ENCODE measurements at regions of chr6 and their contacts with region 1.

Region 1: GRCh38 chr6:117602151-117602898 is at the start of gene GOPC:
- DNase-seq: peak; percentile 87 to 100 (median 94)
- ATAC-seq: peak; percentile 96
- H3K4me3 ChIP-seq: peak within 1 kb of the TSS; percentile 94
- H3K4me3 Mint-ChIP-seq: peak within 1 kb of the TSS; percentile 99
- H3K27ac ChIP-seq: peak within 1 kb of the TSS; percentile 82 to 86
- H3K27ac Mint-ChIP-seq: peak within 1 kb of the TSS; percentile 92
- H3K4me1 ChIP-seq: peaks cover 15% of the 10 kb centered on the region
- H3K4me1 Mint-ChIP-seq: peaks cover 52% of the 10 kb centered on the region
- H3K27me3 ChIP-seq: no peaks in the 10 kb centered on the region
- H3K27me3 Mint-ChIP-seq: no peaks in the 10 kb centered on the region
- CTCF ChIP-seq: no peak
- total RNA-seq, gene GOPC: 9.7 to 10.8 TPM

Region 2: DNA sequence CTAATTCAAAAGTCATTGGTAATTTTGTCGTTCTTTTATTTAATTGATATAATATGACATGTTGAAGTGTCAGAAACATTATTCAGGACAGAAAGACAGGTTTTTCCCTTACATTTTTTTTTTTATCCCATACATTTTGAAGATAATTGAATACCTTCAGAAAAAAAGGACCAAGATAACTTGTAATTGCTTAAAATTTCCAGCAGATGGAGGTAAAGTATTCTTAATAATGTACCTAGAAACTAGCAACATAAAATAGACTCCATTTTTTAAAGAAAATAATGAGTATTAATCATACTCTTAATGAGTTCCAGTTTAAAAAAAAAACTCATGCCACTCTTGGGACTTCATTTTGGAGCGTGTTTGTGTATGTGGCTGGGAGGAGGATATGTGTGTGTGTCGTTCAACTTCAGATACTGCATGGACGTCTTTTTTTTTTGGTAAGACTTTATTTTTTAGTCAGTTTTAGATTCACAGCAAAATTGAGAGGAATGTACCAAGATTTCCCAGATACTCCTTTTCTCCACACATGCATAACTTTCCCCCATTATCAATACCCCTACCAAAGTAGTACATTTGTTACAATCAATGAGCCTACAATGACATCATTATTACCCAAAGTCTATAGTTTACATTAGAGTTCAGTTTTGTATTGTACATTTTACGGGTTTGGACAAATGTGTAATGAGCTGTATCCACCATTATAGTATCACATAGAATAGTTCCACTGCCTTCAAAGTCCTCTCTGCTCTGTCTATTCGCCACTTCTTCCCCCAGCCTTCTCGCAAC is 256.0 kb before region 1 on chr6:
- CTCF ChIA-PET with region 1: no interaction called
- POLR2A ChIA-PET with region 1: no interaction called
- intact Hi-C with region 1: loop called (anchors 2 kb)
- DNase-seq: peak in 3 of 14 experiments; percentile 16 to 30 (median 19)
- ATAC-seq: no peak
- H3K4me3 ChIP-seq: no peak overlapping the region
- H3K4me3 Mint-ChIP-seq: no peak overlapping the region
- H3K27ac ChIP-seq: no peak overlapping the region
- H3K27ac Mint-ChIP-seq: no peak overlapping the region
- H3K4me1 ChIP-seq: no peaks in the 10 kb centered on the region
- H3K4me1 Mint-ChIP-seq: no peaks in the 10 kb centered on the region
- H3K27me3 ChIP-seq: peaks cover 0 to 4% of the 10 kb centered on the region in 2 experiments
- H3K27me3 Mint-ChIP-seq: peaks cover 4% of the 10 kb centered on the region
- CTCF ChIP-seq: peak; percentile 65

Region 3: DNA sequence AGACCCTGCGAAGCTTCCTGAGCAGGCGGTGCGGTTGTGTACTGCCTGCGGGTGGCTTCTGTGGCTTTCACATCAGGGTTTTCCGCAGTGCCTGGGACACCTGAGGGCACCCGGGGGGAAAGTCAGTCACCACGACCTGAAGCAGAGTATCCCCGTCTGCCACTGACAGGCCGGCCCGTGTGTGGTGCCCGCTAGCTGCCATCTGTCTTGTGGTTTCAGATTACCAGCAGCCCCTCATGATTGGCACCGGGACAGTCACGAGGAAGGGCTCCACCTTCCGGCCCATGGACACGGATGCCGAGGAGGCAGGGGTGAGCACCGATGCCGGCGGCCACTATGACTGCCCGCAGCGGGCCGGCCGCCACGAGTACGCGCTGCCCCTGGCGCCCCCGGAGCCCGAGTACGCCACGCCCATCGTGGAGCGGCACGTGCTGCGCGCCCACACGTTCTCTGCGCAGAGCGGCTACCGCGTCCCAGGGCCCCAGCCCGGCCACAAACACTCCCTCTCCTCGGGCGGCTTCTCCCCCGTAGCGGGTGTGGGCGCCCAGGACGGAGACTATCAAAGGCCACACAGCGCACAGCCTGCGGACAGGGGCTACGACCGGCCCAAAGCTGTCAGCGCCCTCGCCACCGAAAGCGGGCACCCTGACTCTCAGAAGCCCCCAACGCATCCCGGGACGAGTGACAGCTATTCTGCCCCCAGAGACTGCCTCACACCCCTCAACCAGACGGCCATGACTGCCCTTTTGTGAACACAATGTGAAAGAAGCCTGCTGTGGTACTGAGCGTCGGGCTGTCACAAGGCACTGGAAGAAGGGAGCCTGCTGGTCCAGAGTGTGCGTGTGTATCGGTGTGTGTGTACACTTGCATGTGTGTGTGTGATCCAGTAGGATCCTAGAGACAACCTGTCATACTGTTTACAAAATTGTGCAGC is 54.4 kb before region 1 on chr6:
- CTCF ChIA-PET with region 1: interaction called, 3 read pairs
- POLR2A ChIA-PET with region 1: interaction called, 37 read pairs
- intact Hi-C with region 1: loop called in 1 of 2 experiments (anchors 2 kb)
- DNase-seq: peak; percentile 15 to 75 (median 36)
- ATAC-seq: peak; percentile 50
- H3K4me3 ChIP-seq: peak overlapping the region; percentile 75
- H3K4me3 Mint-ChIP-seq: peak overlapping the region; percentile 82
- H3K27ac ChIP-seq: peak overlapping the region; percentile 14 to 49
- H3K27ac Mint-ChIP-seq: peak overlapping the region; percentile 81
- H3K4me1 ChIP-seq: peaks cover 36% of the 10 kb centered on the region
- H3K4me1 Mint-ChIP-seq: peaks cover 43% of the 10 kb centered on the region
- H3K27me3 ChIP-seq: no peaks in the 10 kb centered on the region
- H3K27me3 Mint-ChIP-seq: no peaks in the 10 kb centered on the region
- CTCF ChIP-seq: no peak

Region 4: GRCh38 chr6:117637770-117638169 is 35.4 kb after region 1 on chr6:
- CTCF ChIA-PET with region 1: no interaction called
- POLR2A ChIA-PET with region 1: no interaction called
- intact Hi-C with region 1: no loop called
- DNase-seq: no peak
- ATAC-seq: no peak
- H3K4me3 ChIP-seq: no peak overlapping the region
- H3K4me3 Mint-ChIP-seq: no peak overlapping the region
- H3K27ac ChIP-seq: no peak overlapping the region
- H3K27ac Mint-ChIP-seq: no peak overlapping the region
- H3K4me1 ChIP-seq: no peaks in the 10 kb centered on the region
- H3K4me1 Mint-ChIP-seq: no peaks in the 10 kb centered on the region
- H3K27me3 ChIP-seq: no peaks in the 10 kb centered on the region
- H3K27me3 Mint-ChIP-seq: no peaks in the 10 kb centered on the region
- CTCF ChIP-seq: no peak

Region 5: DNA sequence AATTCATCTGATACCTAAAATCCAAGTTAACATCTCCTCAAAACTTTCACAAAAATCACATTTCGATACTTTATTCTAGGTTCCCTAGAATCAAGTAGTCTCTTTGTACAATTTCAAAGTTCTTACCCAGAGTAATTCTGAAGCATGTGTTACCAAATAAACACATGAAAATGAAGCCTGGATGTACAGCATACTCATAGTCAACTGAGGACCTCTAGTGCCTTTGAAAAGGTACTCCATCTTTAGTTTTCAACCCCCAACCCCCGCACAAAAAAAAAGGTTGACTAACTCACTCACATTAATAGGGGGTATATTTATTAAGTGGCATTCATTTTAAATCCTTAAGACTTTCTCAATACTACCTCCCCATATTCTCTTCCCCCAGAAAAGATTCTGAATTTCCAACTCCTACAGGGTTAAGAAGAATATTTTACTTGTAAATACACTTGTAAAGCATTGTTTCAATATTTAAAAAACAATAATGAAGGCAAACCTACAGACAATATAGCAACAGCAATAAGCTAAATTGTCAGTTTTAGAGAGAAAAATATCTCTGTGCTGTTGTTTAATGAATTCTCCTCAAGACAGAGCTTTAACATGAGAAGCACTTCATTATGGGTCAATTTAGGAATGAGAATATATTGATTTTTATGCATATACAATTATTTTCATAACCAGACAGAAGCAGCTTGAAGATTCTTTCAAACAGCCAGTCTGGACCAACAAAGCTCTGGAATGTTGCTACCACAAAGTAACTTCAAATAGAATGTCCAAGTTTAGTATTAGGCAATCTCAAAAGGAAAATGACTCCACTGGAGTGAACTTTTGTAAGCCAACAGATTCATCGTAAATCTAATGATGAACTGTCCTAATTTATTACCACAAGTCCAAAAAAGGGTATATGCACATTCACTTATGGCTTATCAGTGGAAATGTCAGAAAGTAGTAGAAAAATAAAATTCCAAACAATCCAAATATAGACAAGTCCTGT is 949.0 kb after region 1 on chr6:
- CTCF ChIA-PET with region 1: no interaction called
- POLR2A ChIA-PET with region 1: no interaction called
- intact Hi-C with region 1: loop called in 1 of 2 experiments (anchors 10 kb)
- DNase-seq: peak in 4 of 14 experiments; percentile 42 to 70 (median 61)
- ATAC-seq: peak; percentile 96
- H3K4me3 ChIP-seq: no peak overlapping the region
- H3K4me3 Mint-ChIP-seq: no peak overlapping the region
- H3K27ac ChIP-seq: no peak overlapping the region
- H3K27ac Mint-ChIP-seq: peak overlapping the region; percentile 13
- H3K4me1 ChIP-seq: no peaks in the 10 kb centered on the region
- H3K4me1 Mint-ChIP-seq: peaks cover 56% of the 10 kb centered on the region
- H3K27me3 ChIP-seq: no peaks in the 10 kb centered on the region
- H3K27me3 Mint-ChIP-seq: no peaks in the 10 kb centered on the region
- CTCF ChIP-seq: peak; percentile 63